ENCODE measurements at regions of chrX and their contacts with region 1.

Region 1: GRCh38 chrX:110133735-110134370 is 130.9 kb downstream of the TMEM164 start:
- DNase-seq: no peak
- H3K4me3 Mint-ChIP-seq: no peak overlapping the region
- H3K27ac Mint-ChIP-seq: peak overlapping the region; percentile 87
- H3K4me1 Mint-ChIP-seq: peaks cover 14% of the 10 kb centered on the region
- H3K27me3 Mint-ChIP-seq: no peaks in the 10 kb centered on the region

Region 2: GRCh38 chrX:109974906-109975655 is 158.8 kb before region 1 on chrX:
- intact Hi-C with region 1: loop called (anchors 5 kb)
- DNase-seq: no peak
- H3K4me3 Mint-ChIP-seq: no peak overlapping the region
- H3K27ac Mint-ChIP-seq: peak overlapping the region; percentile 73
- H3K4me1 Mint-ChIP-seq: peaks cover 16% of the 10 kb centered on the region
- H3K27me3 Mint-ChIP-seq: peaks cover 2% of the 10 kb centered on the region

Region 3: GRCh38 chrX:110002300-110003166 is 131.3 kb before region 1 on chrX and contains the start of gene TMEM164:
- intact Hi-C with region 1: loop called (anchors 10 kb)
- DNase-seq: peak; percentile 76
- H3K4me3 Mint-ChIP-seq: peak within 1 kb of the TSS; percentile 93
- H3K27ac Mint-ChIP-seq: peak within 1 kb of the TSS; percentile 94
- H3K4me1 Mint-ChIP-seq: peaks cover 24% of the 10 kb centered on the region
- H3K27me3 Mint-ChIP-seq: no peaks in the 10 kb centered on the region
- total RNA-seq, gene TMEM164: 19.5 and 20.0 TPM in 2 replicates

Region 4: DNA sequence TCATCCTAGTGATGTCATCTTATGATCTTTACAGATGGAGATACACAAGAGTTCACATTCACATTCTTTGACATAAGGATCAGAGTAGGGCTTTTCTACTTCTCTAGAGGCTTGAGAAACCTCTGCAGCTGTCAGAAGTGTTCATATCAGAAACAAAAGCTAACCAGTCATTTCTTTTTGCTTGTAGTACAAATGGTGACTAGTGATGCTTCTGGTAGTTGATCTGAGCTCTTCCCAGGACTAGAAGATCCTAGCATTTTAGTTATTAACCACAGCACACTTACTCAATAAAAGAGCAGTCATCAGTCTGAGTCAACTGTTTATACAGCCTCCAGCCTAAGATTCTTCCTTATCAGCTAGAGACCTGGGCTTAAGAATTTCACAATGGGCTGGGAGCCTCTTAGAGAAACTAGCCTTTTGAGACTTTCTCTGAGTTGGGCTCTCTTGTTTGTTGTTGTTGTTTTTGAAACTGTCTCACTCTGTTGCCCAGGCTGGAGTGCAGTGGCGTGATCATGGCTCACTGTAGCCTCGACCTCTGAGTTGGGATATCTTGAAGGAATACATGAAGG is 46.9 kb before region 1 on chrX:
- intact Hi-C with region 1: loop called (anchors 2 kb)
- DNase-seq: no peak
- H3K4me3 Mint-ChIP-seq: no peak overlapping the region
- H3K27ac Mint-ChIP-seq: peak overlapping the region; percentile 76
- H3K4me1 Mint-ChIP-seq: peaks cover 23% of the 10 kb centered on the region
- H3K27me3 Mint-ChIP-seq: no peaks in the 10 kb centered on the region

Region 5: DNA sequence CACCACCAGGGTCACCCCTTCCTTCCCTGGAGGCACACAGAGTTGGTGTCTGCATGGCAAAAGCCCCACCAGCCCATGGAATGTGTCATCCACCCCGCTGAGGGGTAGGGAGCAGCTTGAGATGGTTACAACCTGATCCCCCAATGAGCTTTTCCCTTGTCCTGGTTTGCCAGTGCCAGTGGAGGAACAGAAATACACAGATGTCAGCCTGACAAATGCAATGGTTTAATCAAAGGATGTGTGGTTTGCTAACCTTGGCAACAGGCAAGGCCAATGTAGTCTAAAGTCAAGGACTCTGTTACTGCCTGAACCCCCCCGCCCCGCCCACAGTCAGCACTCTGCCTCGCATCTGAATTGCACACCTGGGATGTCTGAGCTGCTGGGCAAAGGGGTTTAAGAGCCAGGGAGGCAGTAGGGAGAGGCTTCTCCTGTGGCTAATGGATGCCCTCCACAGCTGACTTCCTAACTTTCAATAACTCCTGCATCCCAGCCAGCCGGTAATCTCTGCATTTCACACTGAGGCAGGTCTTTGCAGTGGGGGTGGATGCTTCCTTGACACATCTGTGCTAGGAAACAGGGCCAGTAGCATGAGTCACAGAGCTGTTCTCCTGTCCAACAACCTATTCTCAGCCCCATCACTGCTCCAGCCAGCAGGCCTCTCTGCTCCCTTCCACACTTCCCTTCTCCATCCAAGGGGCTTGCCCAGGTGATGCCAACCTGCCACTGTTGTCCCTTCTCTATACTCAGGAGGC is 46.5 kb after region 1 on chrX:
- intact Hi-C with region 1: no loop called
- DNase-seq: no peak
- H3K4me3 Mint-ChIP-seq: no peak overlapping the region
- H3K27ac Mint-ChIP-seq: no peak overlapping the region
- H3K4me1 Mint-ChIP-seq: peaks cover 12% of the 10 kb centered on the region
- H3K27me3 Mint-ChIP-seq: no peaks in the 10 kb centered on the region